Psoas muscle (tissue), 8 donors: ENCODE measurements at regions of chr16 and their contacts with region 1.

Region 1: DNA sequence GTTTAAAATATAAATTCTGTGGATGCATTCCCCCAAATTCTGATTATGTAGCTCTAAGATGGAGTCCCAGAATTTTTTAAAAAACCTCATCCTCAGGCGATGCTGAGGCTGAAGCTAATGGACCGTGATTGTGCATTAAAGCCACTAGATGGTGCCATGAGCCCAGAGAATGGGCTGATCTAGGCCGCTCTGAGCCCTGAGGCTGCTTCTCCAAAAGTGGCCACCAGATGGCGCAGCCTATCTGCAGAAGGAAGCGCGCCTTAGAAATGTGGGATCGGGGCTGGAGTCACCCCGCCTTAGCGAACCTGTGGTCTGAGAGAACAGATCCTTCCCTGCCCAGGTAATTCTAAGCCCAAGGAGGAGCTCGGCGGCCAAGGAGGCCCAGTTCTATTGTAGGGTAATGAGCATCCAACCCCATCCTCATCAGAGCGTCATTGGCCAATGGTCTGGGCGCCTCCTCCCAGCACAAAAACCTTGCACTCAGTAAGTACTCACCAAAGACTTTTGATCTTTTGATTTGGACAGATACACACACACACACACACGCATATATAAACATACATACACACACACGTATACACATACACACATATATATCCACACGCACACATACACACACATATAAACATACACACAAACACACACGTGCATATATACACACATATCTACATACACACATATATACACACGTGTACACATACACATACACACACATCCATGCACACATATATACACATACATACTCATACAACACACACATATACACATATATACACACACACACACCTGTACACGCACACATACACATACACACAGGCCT is 13.7 kb upstream of the MMP2 start:
- DNase-seq: peak; percentile 86 to 92
- ATAC-seq: peak; percentile 94 to 97 (median 96)
- H3K4me3 ChIP-seq: no peak overlapping the region
- H3K27ac ChIP-seq: no peak overlapping the region
- H3K4me1 ChIP-seq: no peaks in the 10 kb centered on the region
- H3K27me3 ChIP-seq: no peaks in the 10 kb centered on the region
- CTCF ChIP-seq: peak; percentile 100

Region 2: DNA sequence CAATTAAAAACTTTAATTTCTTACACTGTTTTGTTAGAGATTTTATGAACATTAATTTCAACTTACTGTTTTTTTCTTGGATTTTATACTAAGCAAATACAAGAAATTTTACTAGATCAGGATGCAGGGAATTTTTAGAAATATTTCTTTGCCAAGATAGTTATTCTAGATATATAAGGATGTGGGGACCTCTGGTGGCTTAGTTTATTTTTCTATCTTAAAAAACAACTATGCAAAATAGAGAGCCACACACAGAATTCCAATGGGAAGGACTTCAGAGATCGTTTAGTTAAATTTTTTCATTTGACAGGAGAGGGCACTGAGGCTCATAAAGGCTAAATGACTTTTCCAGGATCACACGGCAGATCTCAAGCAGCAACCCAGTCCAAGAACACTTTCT is 78.2 kb after region 1 on chr16:
- intact Hi-C with region 1: loop called (anchors 1 to 2 kb)
- DNase-seq: no peak
- ATAC-seq: peak in 1 of 4 donors; percentile 66
- H3K4me3 ChIP-seq: no peak overlapping the region
- H3K27ac ChIP-seq: no peak overlapping the region
- H3K4me1 ChIP-seq: no peaks in the 10 kb centered on the region
- H3K27me3 ChIP-seq: no peaks in the 10 kb centered on the region
- CTCF ChIP-seq: peak; percentile 53

Region 3: DNA sequence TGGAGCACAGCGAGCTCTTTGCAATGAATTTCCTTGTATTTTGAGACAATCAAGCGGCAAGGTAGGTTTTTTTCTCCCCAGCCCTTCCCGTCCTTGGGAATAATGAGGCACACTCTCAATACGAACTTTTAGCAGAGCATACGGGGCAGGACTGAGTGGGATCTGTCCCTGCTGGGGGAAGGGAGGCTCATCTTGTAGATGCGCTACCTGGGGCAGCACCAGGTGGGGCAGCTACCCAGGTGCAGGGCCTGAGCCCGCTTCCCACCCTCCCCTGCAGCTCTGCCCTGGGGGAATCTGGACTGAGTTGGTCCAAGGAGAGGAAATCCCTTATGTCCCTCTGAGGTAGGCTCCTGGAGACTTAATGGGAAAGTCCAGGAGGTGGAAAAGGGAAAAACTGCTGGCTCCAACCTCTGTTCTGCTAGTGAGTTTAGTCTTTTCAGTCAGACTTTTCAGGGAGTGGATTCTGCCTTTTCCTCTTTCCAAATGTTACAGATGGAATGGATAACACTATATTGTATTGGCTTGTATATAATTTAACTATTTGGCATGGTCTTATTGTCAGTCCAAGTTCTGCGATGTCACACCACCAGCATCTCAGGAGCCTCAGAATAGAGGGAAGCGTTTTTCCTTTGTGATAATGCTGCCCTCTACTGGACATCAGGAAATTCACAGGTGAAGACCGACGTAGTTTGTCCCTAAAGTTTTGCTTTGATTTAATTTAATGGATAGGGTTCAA is 377.2 kb after region 1 on chr16:
- intact Hi-C with region 1: loop called (anchors 1 to 5 kb)
- DNase-seq: no peak
- ATAC-seq: peak; percentile 58 to 76 (median 66)
- H3K4me3 ChIP-seq: no peak overlapping the region
- H3K27ac ChIP-seq: no peak overlapping the region
- H3K4me1 ChIP-seq: no peaks in the 10 kb centered on the region
- H3K27me3 ChIP-seq: peaks cover 0 to 4% (median 2%) of the 10 kb centered on the region in 3 donors
- CTCF ChIP-seq: peak; percentile 86